ENCODE measurements at regions of chr1 and their contacts with region 1.

Region 1: DNA sequence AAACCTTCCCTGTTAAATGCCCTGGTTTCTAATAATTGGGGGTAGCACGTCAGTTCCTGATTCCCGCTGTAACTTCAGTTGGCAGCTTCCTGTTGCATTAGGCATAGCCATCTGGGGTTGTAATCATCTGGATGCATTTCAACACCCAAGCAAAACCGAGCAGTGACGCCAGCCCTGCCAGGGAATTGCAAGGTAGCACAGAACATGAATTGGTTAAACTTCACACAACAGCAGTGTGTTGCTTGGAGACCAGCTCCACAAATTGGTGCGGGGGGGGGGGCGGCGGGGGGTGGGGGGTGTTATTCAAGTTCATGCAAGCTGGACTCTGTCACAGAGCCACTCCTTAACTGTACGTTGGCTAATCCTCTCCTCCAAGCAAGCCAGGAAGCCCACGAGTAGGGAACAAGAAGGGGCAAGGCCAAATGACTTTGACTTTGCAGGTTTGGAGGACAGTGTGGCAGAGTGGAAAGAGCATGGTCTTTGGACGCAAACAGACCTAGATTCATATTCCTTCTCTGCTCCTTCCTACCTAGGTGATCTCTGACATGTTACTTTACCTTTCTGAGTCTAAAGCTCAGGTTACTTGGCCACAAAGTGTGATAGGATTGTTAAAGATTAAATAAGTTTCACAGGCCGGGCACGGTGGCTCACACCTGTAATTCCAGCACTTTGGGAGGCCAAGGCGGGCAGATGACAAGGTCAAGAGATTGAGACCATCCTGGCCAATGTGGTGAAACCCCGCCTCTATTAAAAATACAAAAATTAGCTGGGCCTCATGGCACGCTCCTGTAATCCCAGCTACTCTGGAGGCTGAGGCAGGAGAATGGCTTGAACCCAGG is 4.7 kb downstream of the LAX1 start:
- DNase-seq: no peak
- ATAC-seq: peak; percentile 52
- H3K4me3 ChIP-seq: no peak overlapping the region
- H3K4me3 Mint-ChIP-seq: peak overlapping the region in 7 of 10 donors; percentile 13 to 96 (median 52)
- H3K27ac ChIP-seq: no peak overlapping the region
- H3K27ac Mint-ChIP-seq: peak overlapping the region; percentile 68 to 99 (median 90)
- H3K4me1 ChIP-seq: peaks cover 21% of the 10 kb centered on the region in 2 donors
- H3K4me1 Mint-ChIP-seq: peaks cover 25 to 64% (median 35%) of the 10 kb centered on the region in 7 donors
- H3K27me3 ChIP-seq: no peaks in the 10 kb centered on the region
- H3K27me3 Mint-ChIP-seq: no peaks in the 10 kb centered on the region

Region 2: GRCh38 chr1:203267347-203267846 is 502.3 kb before region 1 on chr1:
- CTCF ChIA-PET with region 1: no interaction called
- POLR2A ChIA-PET with region 1: interaction called, 3 read pairs
- intact Hi-C with region 1: loop called (anchors 5 to 10 kb)
- DNase-seq: peak; percentile 49 to 89 (median 84)
- ATAC-seq: peak; percentile 80
- H3K4me3 ChIP-seq: peak overlapping the region; percentile 82
- H3K4me3 Mint-ChIP-seq: peak overlapping the region; percentile 76 to 94 (median 90)
- H3K27ac ChIP-seq: peak overlapping the region; percentile 86
- H3K27ac Mint-ChIP-seq: peak overlapping the region in 8 of 9 donors; percentile 80 to 95 (median 92)
- H3K4me1 ChIP-seq: peaks cover 10 to 26% of the 10 kb centered on the region in 2 donors
- H3K4me1 Mint-ChIP-seq: peaks cover 12 to 27% (median 24%) of the 10 kb centered on the region in 7 donors
- H3K27me3 ChIP-seq: no peaks in the 10 kb centered on the region
- H3K27me3 Mint-ChIP-seq: peaks cover 0 to 14% (median 0%) of the 10 kb centered on the region in 5 donors

Region 3: GRCh38 chr1:203326830-203327683 is 442.7 kb before region 1 on chr1:
- CTCF ChIA-PET with region 1: no interaction called
- POLR2A ChIA-PET with region 1: interaction called, 7 read pairs
- intact Hi-C with region 1: loop called in 1 of 2 experiments (anchors 5 kb)
- DNase-seq: peak; percentile 90 to 96 (median 94)
- ATAC-seq: peak; percentile 84
- H3K4me3 ChIP-seq: peak overlapping the region; percentile 72
- H3K4me3 Mint-ChIP-seq: peak overlapping the region; percentile 80 to 89 (median 86)
- H3K27ac ChIP-seq: peak overlapping the region; percentile 98
- H3K27ac Mint-ChIP-seq: peak overlapping the region; percentile 90 to 100 (median 99)
- H3K4me1 ChIP-seq: peaks cover 55 to 56% of the 10 kb centered on the region in 2 donors
- H3K4me1 Mint-ChIP-seq: peaks cover 40 to 73% (median 70%) of the 10 kb centered on the region in 7 donors
- H3K27me3 ChIP-seq: no peaks in the 10 kb centered on the region
- H3K27me3 Mint-ChIP-seq: no peaks in the 10 kb centered on the region

Region 4: DNA sequence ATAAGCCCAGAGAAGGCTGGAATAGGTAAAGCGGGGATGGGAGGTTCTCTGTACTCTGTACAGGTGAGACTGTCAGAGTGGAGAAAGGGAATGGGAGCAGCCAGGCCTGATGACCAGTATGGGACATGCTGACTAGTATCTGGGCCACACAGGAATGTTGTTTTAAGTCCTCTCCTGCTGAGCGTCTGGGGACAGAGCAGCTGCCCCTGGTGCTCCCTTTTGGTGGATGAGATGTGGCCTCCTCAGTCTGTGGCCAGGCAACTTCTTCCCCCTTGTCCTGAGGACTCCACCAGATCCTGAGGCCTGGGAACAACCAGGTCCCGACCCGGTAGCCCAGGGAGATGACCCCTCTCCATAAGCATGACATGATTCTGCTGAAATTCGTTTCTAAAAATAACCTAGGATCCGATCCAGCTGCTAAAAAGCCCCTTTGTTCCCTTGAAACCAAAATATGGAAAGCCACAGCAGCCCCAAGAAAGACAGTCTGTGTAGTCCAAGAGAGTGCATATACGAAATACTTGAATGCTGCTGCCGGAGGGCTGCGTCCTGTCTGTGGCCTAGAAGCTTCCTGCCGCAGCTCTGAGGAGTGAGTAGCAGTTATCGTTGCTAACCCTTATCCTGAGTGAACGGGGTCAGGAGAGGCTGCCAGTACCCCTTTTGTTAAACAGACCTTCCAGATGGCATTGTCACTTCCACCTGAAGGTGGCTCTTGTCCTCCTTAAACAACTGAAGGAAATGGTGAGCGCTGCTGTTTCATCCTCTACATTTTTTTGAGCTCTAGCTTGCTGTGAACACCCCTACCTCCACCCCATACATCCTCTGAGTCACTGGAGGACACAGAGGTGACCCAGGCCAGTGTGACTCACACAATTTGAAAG is 95.9 kb before region 1 on chr1:
- CTCF ChIA-PET with region 1: no interaction called
- POLR2A ChIA-PET with region 1: no interaction called
- intact Hi-C with region 1: loop called in 1 of 2 experiments (anchors 2 kb)
- DNase-seq: peak; percentile 27 to 79 (median 73)
- ATAC-seq: peak; percentile 91
- H3K4me3 ChIP-seq: no peak overlapping the region
- H3K4me3 Mint-ChIP-seq: peak overlapping the region; percentile 57 to 87 (median 77)
- H3K27ac ChIP-seq: peak overlapping the region; percentile 53
- H3K27ac Mint-ChIP-seq: peak overlapping the region; percentile 87 to 99 (median 95)
- H3K4me1 ChIP-seq: peaks cover 52 to 54% of the 10 kb centered on the region in 2 donors
- H3K4me1 Mint-ChIP-seq: peaks cover 50 to 81% (median 71%) of the 10 kb centered on the region in 7 donors
- H3K27me3 ChIP-seq: no peaks in the 10 kb centered on the region
- H3K27me3 Mint-ChIP-seq: no peaks in the 10 kb centered on the region

Region 5: DNA sequence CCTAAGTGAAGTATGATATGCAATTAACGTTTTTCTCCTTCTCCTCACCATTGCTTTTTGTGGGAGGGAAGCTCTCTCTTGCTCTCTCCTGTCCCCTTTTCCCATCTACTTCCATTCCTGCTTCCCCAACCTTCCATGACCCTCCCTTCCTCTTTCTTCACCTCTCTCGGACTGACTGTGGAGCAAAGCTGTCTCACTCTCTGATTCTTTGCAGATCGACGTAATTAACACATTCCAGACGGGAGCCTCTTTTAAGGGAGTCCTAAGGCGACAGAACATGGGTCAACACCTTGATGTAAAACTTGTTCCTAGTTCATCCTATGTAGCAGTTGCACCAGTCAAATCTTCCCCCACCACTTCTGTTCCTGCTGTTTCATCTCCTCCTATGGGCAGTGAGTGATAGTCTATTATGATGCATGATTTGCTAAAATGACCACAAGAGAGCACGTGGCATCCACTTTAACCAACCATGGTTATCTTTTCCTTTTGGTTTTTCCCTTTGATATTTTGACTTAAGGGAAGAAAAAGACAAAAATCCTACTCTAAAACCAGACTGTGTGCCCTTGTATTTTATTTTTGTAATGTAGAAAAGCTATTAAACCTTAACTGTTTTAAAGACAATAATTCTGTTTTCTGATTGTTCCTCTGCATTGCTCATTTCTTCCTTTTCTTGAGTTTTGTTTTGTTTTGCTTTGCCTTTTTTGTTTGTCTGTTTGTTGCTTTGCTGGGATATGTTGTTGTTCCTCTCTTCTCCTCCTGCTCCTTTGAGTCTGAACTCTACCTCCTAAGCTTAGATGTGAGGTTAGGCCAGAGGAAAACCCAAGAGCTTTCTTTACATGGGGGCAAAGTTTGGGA is 36.5 kb before region 1 on chr1:
- CTCF ChIA-PET with region 1: no interaction called
- POLR2A ChIA-PET with region 1: interaction called, 10 read pairs
- intact Hi-C with region 1: loop called (anchors 1 to 5 kb)
- DNase-seq: no peak
- ATAC-seq: no peak
- H3K4me3 ChIP-seq: no peak overlapping the region
- H3K4me3 Mint-ChIP-seq: no peak overlapping the region
- H3K27ac ChIP-seq: no peak overlapping the region
- H3K27ac Mint-ChIP-seq: peak overlapping the region in 2 of 9 donors; percentile 23 to 43
- H3K4me1 ChIP-seq: no peaks in the 10 kb centered on the region
- H3K4me1 Mint-ChIP-seq: peaks cover 0 to 12% (median 0%) of the 10 kb centered on the region in 7 donors
- H3K27me3 ChIP-seq: no peaks in the 10 kb centered on the region
- H3K27me3 Mint-ChIP-seq: no peaks in the 10 kb centered on the region

Region 6: DNA sequence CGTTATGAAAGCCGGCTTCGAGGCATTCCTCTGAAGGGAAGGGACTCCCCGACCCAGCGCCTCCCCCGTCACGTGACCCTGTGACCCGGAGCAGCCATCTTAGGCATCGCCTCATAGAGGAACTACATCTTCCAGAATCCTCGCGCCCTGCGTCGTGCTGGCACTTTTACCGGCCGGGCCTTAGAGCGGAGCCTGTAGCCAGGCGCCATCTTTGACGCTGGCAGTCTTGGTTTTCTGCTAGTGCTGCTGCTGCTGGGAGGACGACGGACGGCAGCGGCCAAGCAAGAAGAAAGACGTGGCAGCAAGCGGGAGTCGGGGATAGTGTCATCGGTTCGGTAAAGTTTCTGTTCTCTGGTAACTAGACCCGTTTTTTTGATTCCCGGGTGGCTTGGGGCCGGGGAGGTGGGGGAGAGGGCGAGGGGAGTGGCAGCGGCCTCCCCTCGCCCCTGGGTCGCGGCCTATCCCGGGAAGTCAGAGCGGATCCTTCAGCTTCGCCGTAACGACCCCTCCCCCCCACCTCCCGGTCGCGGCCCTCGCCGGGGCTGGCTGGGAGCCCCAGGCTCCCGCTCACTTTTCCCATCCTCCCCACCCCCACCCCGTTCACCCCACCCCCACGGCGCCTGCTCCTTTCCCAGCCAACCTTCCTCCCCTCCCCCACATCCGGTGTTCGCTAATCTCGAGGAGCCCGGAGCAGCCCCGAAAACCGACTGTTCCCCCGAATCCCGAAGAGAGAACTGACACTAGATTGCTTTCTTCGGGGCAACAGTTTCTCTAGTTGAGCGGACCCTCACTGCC is 25.9 kb after region 1 on chr1 and contains the starts of genes ZBED6 and ZC3H11A:
- CTCF ChIA-PET with region 1: interaction called, 4 read pairs
- POLR2A ChIA-PET with region 1: interaction called, 12 read pairs
- intact Hi-C with region 1: loop called (anchors 1 kb)
- DNase-seq: peak; percentile 85 to 100 (median 97)
- ATAC-seq: peak; percentile 99
- H3K4me3 ChIP-seq: peak within 1 kb of the TSS; percentile 80
- H3K4me3 Mint-ChIP-seq: peak within 1 kb of the TSS; percentile 94 to 98 (median 96)
- H3K27ac ChIP-seq: peak within 1 kb of the TSS; percentile 80
- H3K27ac Mint-ChIP-seq: peak within 1 kb of the TSS; percentile 82 to 98 (median 96)
- H3K4me1 ChIP-seq: peaks cover 35 to 36% of the 10 kb centered on the region in 2 donors
- H3K4me1 Mint-ChIP-seq: peaks cover 18 to 55% (median 48%) of the 10 kb centered on the region in 7 donors
- H3K27me3 ChIP-seq: no peaks in the 10 kb centered on the region
- H3K27me3 Mint-ChIP-seq: no peaks in the 10 kb centered on the region
- total RNA-seq, gene ZBED6: 23.8 to 36.1 (median 31.9) TPM
- total RNA-seq, gene ZC3H11A: 70.9 to 138 (median 91.6) TPM

Region 7: GRCh38 chr1:204013052-204013451 is 243.3 kb after region 1 on chr1:
- CTCF ChIA-PET with region 1: no interaction called
- POLR2A ChIA-PET with region 1: no interaction called
- intact Hi-C with region 1: no loop called
- DNase-seq: no peak
- ATAC-seq: no peak
- H3K4me3 ChIP-seq: no peak overlapping the region
- H3K4me3 Mint-ChIP-seq: no peak overlapping the region
- H3K27ac ChIP-seq: no peak overlapping the region
- H3K27ac Mint-ChIP-seq: no peak overlapping the region
- H3K4me1 ChIP-seq: no peaks in the 10 kb centered on the region
- H3K4me1 Mint-ChIP-seq: peaks cover 0 to 2% (median 0%) of the 10 kb centered on the region in 7 donors
- H3K27me3 ChIP-seq: no peaks in the 10 kb centered on the region
- H3K27me3 Mint-ChIP-seq: peaks cover 0 to 9% (median 0%) of the 10 kb centered on the region in 5 donors

Region 8: GRCh38 chr1:204633665-204634064 is 863.9 kb after region 1 on chr1:
- CTCF ChIA-PET with region 1: no interaction called
- POLR2A ChIA-PET with region 1: no interaction called
- intact Hi-C with region 1: no loop called
- DNase-seq: no peak
- ATAC-seq: no peak
- H3K4me3 ChIP-seq: no peak overlapping the region
- H3K4me3 Mint-ChIP-seq: no peak overlapping the region
- H3K27ac ChIP-seq: no peak overlapping the region
- H3K27ac Mint-ChIP-seq: no peak overlapping the region
- H3K4me1 ChIP-seq: no peaks in the 10 kb centered on the region
- H3K4me1 Mint-ChIP-seq: no peaks in the 10 kb centered on the region
- H3K27me3 ChIP-seq: no peaks in the 10 kb centered on the region
- H3K27me3 Mint-ChIP-seq: peaks cover 11 to 31% (median 22%) of the 10 kb centered on the region in 5 donors